Activated CD4-positive, alpha-beta T cell treated with anti-CD3 and anti-CD28 coated beads for 36 hours (primary cell): ENCODE measurements at regions of chr20 and their contacts with region 1.

Region 1: DNA sequence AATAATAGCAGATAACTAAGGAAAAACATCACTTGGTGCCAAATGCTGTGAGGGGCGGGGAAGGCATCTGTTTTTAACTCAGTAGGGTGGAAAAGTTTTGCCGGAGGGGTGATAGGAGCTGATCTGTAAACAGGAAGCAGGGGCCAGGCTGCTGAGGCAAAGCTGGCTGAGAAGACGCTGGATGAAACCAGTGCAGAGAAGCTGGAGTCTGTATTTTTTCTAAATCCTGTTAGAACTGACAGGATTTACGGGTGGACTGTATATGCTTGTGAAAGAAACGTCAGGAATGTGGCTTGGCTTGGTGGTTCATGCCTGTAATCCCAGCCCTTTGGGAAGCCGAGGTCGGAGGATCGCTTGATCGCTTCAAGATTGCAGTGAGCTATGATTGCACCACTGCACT is 5.6 kb downstream of the PCMTD2 start:
- DNase-seq: peak; percentile 38
- ATAC-seq: peak; percentile 57
- H3K4me3 Mint-ChIP-seq: no peak overlapping the region
- H3K27ac Mint-ChIP-seq: peak overlapping the region; percentile 69
- H3K4me1 Mint-ChIP-seq: peaks cover 82% of the 10 kb centered on the region
- H3K27me3 Mint-ChIP-seq: no peaks in the 10 kb centered on the region

Region 2: DNA sequence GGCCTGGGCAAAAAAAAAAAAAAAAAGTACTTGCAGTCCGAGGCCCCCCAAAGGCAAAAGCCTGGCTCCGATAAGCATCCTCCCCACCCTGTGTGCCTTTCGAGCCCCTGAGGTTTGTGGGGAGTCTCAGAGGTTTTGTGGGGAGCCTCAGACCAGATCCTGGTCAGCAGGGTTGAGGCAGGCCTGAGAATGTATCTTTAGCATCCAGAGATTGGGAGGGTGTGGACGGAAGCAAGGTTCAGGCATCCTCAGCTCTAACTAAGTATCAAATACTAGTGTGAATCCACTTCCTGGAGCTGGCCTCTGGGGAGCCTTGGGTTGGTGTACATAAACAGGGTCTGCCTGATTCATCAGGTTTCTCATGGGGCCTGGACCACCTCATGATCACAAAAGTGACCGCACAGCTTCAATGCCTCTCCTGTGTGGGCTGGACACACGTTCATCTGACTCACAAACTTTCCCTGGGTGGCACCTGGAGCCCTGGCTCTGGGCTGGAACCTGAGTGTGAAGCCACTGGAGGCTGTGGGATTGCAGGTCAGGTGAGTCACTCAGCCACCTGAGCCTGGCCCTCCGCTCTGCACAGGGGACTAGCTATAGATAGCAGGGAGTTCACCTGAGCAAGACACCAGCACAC is 18.8 kb after region 1 on chr20:
- CTCF ChIA-PET with region 1: interaction called, 24 read pairs
- POLR2A ChIA-PET with region 1: no interaction called
- intact Hi-C with region 1: no loop called
- DNase-seq: no peak
- ATAC-seq: no peak
- H3K4me3 Mint-ChIP-seq: no peak overlapping the region
- H3K27ac Mint-ChIP-seq: no peak overlapping the region
- H3K4me1 Mint-ChIP-seq: peaks cover 3% of the 10 kb centered on the region
- H3K27me3 Mint-ChIP-seq: no peaks in the 10 kb centered on the region